Psoas muscle (tissue), 8 donors: ENCODE measurements at regions of chr22 and their contacts with region 1.

Region 1: DNA sequence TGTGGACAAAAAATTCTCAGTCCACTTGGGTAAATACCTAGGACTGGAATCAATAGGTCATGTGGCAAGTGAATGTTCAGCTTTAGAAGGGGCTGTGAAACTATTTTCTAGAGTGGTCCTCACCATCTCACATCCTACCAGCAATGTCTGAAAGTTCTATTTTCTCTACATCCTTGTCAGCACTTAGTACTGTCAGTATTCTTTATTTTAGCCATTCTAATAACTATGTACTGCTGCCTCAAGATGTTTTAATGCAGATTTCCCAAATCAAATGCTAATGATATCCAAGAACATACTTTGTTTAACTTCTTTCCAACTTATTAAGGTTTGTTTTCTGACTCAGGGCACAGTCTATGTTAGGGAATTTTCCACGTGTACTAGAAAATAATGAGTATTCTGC is 317.0 kb downstream of the BRD1 start:
- DNase-seq: no peak
- ATAC-seq: no peak
- H3K4me3 ChIP-seq: no peak overlapping the region
- H3K27ac ChIP-seq: no peak overlapping the region
- H3K4me1 ChIP-seq: no peaks in the 10 kb centered on the region
- H3K27me3 ChIP-seq: no peaks in the 10 kb centered on the region
- CTCF ChIP-seq: no peak

Region 2: DNA sequence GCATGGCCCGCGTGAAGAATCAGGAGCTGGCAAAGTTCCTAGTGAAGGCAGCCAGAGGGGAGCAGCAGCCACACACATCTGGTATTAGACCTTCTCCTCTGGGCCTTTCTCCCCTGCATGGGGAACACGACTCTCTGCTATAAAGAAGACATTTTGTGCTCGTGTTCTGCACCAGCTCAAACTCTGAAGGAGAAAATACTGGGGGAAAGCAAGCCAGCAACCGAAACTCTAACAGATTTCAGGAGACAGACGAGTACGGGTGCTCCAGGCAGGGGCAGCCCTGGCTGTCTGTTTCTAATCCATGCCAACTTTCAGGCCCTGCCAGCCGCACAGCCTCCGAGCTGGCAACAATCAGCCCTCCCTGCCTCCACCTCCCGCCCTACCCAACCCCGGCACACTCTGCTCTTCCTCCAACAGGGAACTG is 20.7 kb after region 1 on chr22:
- intact Hi-C with region 1: loop called in 1 of 2 experiments (anchors 2 kb)
- DNase-seq: no peak
- ATAC-seq: no peak
- H3K4me3 ChIP-seq: no peak overlapping the region
- H3K27ac ChIP-seq: no peak overlapping the region
- H3K4me1 ChIP-seq: no peaks in the 10 kb centered on the region
- H3K27me3 ChIP-seq: peaks cover 0 to 10% (median 0%) of the 10 kb centered on the region in 3 donors
- CTCF ChIP-seq: no peak

Region 3: GRCh38 chr22:49789289-49790141 is 278.8 kb after region 1 on chr22:
- intact Hi-C with region 1: no loop called
- DNase-seq: peak; percentile 75 to 80
- ATAC-seq: peak in 3 of 4 donors; percentile 10 to 17 (median 11)
- H3K4me3 ChIP-seq: peak overlapping the region; percentile 7
- H3K27ac ChIP-seq: peak overlapping the region; percentile 70
- H3K4me1 ChIP-seq: peaks cover 74% of the 10 kb centered on the region
- H3K27me3 ChIP-seq: no peaks in the 10 kb centered on the region
- CTCF ChIP-seq: no peak